ENCODE measurements at regions of chr1 and their contacts with region 1.

Region 1: DNA sequence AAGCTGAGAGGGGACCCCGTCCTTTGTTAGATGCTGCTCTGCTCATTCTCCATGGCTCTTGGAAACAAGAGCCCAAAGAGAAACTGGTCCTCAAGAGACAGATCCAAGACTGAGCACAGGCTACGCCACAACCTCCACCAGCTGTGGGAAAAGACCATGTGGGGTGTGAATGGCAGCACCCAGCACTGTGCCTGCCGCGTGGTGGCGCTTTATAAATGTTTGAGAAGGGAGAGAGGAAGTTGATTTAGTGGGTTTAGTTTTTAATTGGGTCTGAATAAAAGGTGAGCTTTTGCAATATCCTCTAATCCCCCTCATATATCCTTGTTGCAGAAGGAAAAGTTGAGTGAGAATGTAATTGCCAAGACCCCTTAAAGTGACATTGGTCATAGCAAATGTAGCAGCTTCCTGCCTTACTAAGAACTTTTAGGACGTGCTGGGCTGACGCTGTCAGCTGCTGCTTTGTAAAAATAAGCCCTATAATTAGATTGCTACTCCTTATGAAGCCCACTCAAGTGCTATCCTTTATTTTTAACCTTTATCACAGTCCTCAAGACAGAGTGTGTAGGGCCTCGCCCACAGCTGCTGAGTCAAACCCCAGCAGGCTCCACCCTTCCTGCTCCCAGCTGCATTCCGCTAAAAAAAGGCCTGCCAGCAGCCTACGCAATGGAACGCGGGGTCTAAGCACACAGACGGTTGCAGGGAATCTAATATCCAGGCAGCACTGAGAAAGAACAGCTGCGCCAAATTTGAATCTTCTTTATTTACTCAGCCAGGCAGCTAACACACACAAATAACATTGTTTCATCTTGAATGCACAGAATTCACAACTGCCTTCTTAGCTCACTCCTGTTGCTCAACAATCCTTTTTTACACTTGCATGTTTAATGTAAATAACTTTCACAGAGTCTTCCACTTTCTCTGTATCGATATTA is 47.4 kb upstream of the PRDX6 start:
- DNase-seq: peak; percentile 88 to 90
- H3K4me3 ChIP-seq: peak overlapping the region; percentile 25 to 30
- H3K27ac ChIP-seq: peak overlapping the region; percentile 69 to 77
- H3K4me1 ChIP-seq: peaks cover 0 to 25% (median 15%) of the 10 kb centered on the region in 4 donors
- H3K27me3 ChIP-seq: no peaks in the 10 kb centered on the region
- CTCF ChIP-seq: peak; percentile 39 to 44

Region 2: GRCh38 chr1:173824331-173825081 is 394.8 kb after region 1 on chr1 and contains the starts of genes CENPL and DARS2:
- intact Hi-C with region 1: loop called (anchors 10 kb)
- DNase-seq: peak; percentile 97 to 98
- H3K4me3 ChIP-seq: peak within 1 kb of the TSS; percentile 66 to 74
- H3K27ac ChIP-seq: peak within 1 kb of the TSS; percentile 86 to 95
- H3K4me1 ChIP-seq: peaks cover 0 to 27% (median 9%) of the 10 kb centered on the region in 4 donors
- H3K27me3 ChIP-seq: no peaks in the 10 kb centered on the region
- CTCF ChIP-seq: no peak